Dorsolateral prefrontal cortex (tissue), 120 donors: ENCODE measurements at regions of chr2 and their contacts with region 1.

Region 1: GRCh38 chr2:176643646-176644045 is 374.4 kb downstream of the MTX2 start:
- DNase-seq: no peak
- H3K4me3 ChIP-seq: no peak overlapping the region
- H3K27ac ChIP-seq: no peak overlapping the region
- H3K27me3 ChIP-seq: peaks cover 0 to 93% (median 61%) of the 10 kb centered on the region in 45 donors
- CTCF ChIP-seq: no peak

Region 2: DNA sequence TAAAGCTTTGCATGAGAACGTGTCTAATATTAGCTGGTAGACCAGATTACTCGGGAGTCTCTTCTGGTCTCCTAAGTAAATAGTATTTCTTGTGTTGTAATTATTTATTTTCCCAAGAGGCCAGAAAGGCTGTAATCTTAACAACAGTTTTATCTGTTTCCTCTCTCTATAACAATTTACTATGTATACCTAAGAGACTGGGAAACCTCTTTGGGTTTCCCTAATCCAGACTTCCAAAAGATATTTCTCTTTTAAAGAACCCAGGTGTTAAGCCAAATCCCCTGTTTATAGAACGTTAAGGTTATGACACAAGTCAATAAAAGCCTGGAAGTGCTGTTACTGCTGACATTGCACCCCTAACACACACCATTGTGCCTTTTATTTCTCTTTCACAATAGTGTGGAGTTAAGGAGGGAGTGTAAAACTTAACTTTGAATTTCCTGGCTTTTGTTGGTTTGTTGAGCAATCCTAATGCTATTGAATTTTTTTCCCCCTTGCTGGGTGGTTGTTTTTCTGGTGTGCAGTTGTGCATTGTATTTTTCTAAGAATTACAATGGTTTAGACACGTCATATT is 181.8 kb before region 1 on chr2:
- intact Hi-C with region 1: loop called (anchors 5 to 10 kb)
- DNase-seq: no peak
- H3K4me3 ChIP-seq: no peak overlapping the region
- H3K27ac ChIP-seq: no peak overlapping the region
- H3K27me3 ChIP-seq: peaks cover 0 to 73% (median 9%) of the 10 kb centered on the region in 45 donors
- CTCF ChIP-seq: no peak

Region 3: DNA sequence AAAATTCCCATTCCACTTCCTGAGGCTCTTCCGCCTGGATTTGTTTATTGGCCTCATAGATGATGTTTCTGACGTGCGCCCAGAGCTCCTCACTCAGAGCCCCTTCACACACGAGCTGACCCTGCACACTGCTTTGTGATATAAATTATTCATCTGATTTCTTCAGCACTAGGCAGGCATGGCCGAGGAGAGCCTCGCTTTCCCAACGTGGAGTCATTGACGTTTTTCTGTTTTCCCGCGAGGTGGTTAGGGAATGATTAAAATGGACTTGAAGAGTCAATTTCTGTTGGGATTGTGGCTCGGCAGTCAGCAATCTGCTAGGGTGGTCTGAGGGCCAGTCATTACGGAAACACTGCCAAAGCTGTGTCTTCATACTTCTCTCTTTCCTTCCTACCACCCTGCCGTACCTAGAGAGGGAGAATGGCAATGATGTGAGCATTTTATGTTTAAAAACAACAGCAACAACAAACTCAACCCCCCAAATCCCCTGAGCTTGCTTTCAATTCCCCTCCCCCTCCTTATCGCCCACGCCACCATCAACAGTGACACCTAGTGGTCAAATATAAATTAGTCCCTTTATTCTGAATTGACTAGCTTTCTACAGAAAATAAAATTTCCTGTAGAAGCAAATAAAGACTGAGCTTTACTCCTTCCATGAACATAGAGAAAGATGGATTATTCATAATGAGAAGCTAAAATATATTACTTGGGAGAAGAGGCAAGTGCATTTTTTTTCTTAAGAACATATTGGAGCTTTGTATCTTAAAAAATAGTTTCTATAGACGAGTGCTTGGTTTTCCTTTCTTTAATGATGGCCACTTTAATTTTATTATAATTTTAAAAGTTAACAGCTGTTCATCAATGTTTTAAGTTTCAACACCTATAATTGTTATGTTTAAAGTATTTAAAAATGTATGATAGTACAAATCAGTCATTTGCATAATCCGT is 89.3 kb before region 1 on chr2:
- intact Hi-C with region 1: loop called (anchors 10 kb)
- DNase-seq: peak in 3 of 10 donors; percentile 27 to 42 (median 31)
- H3K4me3 ChIP-seq: peak overlapping the region; percentile 21 to 77 (median 57)
- H3K27ac ChIP-seq: peak overlapping the region in 44 of 59 donors; percentile 9 to 83 (median 60)
- H3K27me3 ChIP-seq: peaks cover 0 to 55% (median 12%) of the 10 kb centered on the region in 45 donors
- CTCF ChIP-seq: peak; percentile 68 to 89 (median 81)

Region 4: GRCh38 chr2:177078416-177078815 is 434.8 kb after region 1 on chr2:
- intact Hi-C with region 1: no loop called
- DNase-seq: peak in 4 of 10 donors; percentile 14 to 60 (median 38)
- H3K4me3 ChIP-seq: no peak overlapping the region
- H3K27ac ChIP-seq: no peak overlapping the region
- H3K27me3 ChIP-seq: peaks cover 0 to 13% (median 0%) of the 10 kb centered on the region in 45 donors
- CTCF ChIP-seq: no peak

Region 5: GRCh38 chr2:177355874-177356273 is 712.2 kb after region 1 on chr2:
- intact Hi-C with region 1: no loop called
- DNase-seq: no peak
- H3K4me3 ChIP-seq: peak overlapping the region in 1 of 59 donors; percentile 3
- H3K27ac ChIP-seq: peak overlapping the region in 25 of 59 donors; percentile 5 to 77 (median 42)
- H3K27me3 ChIP-seq: no peaks in the 10 kb centered on the region
- CTCF ChIP-seq: no peak